Activated T-helper 1 cell treated with anti-CD3 and anti-CD28 coated beads, Interleukin-12 subunit alpha, Interleukin-12 subunit beta, Interleukin-2, Interleukin-4 antibody, amounts not matched to agents 30 ng/mL and 10 ng/mL and 1 ng/mL, durations not matched to agents 14 hours and 24 hours and 36 hours (primary cell): ENCODE measurements at regions of chr14 and their contacts with region 1.

Region 1: GRCh38 chr14:68843471-68844209 is 50.8 kb upstream of the ZFP36L1 start:
- DNase-seq: peak; percentile 56
- H3K4me3 Mint-ChIP-seq: peak overlapping the region; percentile 13
- H3K27ac Mint-ChIP-seq: no peak overlapping the region
- H3K4me1 Mint-ChIP-seq: peaks cover 24% of the 10 kb centered on the region
- H3K27me3 Mint-ChIP-seq: peaks cover 13% of the 10 kb centered on the region

Region 2: DNA sequence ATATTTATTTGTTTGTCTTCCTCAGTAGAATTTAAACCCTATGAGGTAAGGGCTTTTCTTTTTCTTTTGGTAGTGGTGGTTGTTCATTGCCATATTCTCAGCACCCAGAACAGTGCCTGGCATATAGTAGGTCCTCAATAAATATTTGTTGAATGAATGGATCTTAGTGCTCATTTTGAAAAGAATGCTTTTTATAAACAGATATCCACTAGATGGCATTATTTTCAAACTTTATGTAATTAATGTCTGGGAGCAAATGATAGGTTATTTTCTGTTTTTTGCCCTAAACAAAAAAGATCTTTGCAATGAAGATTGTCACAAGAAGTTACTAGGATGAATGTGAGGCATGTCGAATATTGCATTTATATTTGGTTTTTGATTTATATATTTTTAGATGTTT is 959.9 kb before region 1 on chr14:
- intact Hi-C with region 1: loop called (anchors 2 kb)
- DNase-seq: no peak
- H3K4me3 Mint-ChIP-seq: no peak overlapping the region
- H3K27ac Mint-ChIP-seq: no peak overlapping the region
- H3K4me1 Mint-ChIP-seq: peaks cover 13% of the 10 kb centered on the region
- H3K27me3 Mint-ChIP-seq: peaks cover 1% of the 10 kb centered on the region

Region 3: DNA sequence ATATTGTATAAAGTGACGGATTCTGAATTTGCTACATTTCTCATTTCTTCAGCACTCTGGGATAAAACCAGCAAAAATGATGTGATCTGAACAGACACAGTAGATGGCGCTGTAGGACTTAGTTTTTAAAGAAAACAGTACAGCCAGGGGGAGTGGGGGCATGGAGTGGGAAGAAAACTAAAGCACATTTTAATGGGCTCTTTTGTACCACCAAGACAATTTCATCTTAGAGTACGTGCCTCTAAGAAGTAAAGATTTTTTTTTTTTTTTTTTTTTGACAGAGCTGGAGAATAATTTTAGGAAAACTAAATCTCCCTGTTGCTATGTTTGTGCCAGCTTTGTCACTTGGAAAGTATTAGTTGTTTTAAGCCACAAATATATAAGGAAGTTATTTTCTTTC is 899.7 kb before region 1 on chr14:
- intact Hi-C with region 1: loop called (anchors 2 kb)
- DNase-seq: no peak
- H3K4me3 Mint-ChIP-seq: no peak overlapping the region
- H3K27ac Mint-ChIP-seq: no peak overlapping the region
- H3K4me1 Mint-ChIP-seq: no peaks in the 10 kb centered on the region
- H3K27me3 Mint-ChIP-seq: no peaks in the 10 kb centered on the region

Region 4: DNA sequence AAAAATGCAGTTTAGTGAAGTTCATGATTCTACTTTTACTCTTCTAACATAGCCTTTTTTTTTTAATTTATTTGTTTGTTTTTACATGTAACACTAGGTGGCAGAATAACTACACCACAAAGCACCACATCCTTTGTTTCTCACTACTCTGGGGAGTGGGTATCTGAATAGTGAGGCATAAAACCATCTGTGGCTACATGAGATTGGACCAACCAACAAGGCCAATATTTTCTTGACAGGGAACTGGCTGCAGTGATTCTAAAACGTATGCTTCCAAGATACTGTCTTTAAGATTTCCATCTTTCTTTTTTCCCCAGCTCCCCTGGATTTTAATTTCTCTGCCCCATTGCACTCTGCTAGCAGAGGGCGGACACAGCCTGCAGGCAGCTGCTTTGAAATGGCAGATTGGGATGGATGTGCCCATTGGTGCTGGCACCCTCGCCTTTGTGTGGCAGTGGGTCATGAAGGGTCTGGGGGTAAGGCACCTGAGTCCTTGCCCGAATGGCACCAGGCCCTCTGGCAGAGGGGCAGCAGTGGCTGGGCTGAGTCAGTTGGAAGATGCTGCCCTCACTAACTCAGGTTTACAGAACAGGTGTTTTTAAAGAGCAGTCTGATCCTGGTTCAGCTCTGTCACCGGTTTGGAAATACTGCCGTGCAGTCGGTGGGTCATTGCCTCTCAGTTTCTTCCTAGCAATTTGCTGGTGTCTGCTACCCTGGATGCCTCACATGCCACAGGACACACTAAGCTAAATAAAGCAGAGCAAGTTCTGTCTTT is 595.0 kb before region 1 on chr14:
- intact Hi-C with region 1: loop called (anchors 1 kb)
- DNase-seq: no peak
- H3K4me3 Mint-ChIP-seq: no peak overlapping the region
- H3K27ac Mint-ChIP-seq: no peak overlapping the region
- H3K4me1 Mint-ChIP-seq: peaks cover 41% of the 10 kb centered on the region
- H3K27me3 Mint-ChIP-seq: no peaks in the 10 kb centered on the region

Region 5: DNA sequence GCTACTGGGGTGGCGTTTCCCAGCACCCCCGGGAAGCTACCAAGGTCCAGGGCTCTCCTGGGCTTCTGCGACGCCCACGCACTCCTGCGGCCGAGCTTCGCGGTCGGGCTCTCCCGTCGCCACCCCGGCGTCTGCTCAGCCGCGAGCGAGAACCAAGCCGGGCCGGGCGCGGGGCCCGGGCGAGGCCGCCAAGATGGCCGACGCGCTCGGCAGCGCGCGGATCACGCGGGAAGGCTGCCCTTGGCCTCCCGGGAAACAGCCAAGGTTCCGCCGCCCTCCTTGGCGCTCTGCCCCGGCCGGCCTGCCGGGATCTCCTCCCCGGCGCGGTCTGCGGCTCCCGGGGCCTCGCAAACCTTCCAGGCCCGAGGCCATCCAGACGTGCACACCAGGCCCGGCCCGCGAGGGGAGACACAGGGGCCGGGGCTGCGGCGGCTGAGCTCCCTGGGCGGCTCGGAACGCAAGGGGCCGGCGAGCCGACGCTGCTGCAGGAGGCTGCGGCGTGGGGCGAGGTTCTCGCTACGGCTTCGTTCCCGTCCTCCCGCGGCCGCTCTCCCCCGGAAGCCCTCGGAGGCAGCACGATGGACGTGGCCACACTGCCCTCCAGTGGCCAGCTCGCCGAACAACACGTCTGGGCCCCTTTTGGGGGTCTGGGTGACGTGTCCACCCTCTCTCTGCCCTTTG is 27.2 kb before region 1 on chr14:
- intact Hi-C with region 1: loop called (anchors 2 kb)
- DNase-seq: peak; percentile 84
- H3K4me3 Mint-ChIP-seq: peak overlapping the region; percentile 76
- H3K27ac Mint-ChIP-seq: peak overlapping the region; percentile 90
- H3K4me1 Mint-ChIP-seq: peaks cover 58% of the 10 kb centered on the region
- H3K27me3 Mint-ChIP-seq: no peaks in the 10 kb centered on the region